ENCODE measurements at regions of chrX and their contacts with region 1.

Region 1: GRCh38 chrX:154478728-154479622 is at the start of gene LAGE3:
- DNase-seq: peak; percentile 93
- H3K4me3 Mint-ChIP-seq: peak within 1 kb of the TSS; percentile 88
- H3K27ac Mint-ChIP-seq: peak within 1 kb of the TSS; percentile 91
- H3K4me1 Mint-ChIP-seq: peaks cover 23% of the 10 kb centered on the region
- H3K27me3 Mint-ChIP-seq: no peaks in the 10 kb centered on the region
- total RNA-seq, gene LAGE3: 60.3 and 63.2 TPM in 2 replicates

Region 2: DNA sequence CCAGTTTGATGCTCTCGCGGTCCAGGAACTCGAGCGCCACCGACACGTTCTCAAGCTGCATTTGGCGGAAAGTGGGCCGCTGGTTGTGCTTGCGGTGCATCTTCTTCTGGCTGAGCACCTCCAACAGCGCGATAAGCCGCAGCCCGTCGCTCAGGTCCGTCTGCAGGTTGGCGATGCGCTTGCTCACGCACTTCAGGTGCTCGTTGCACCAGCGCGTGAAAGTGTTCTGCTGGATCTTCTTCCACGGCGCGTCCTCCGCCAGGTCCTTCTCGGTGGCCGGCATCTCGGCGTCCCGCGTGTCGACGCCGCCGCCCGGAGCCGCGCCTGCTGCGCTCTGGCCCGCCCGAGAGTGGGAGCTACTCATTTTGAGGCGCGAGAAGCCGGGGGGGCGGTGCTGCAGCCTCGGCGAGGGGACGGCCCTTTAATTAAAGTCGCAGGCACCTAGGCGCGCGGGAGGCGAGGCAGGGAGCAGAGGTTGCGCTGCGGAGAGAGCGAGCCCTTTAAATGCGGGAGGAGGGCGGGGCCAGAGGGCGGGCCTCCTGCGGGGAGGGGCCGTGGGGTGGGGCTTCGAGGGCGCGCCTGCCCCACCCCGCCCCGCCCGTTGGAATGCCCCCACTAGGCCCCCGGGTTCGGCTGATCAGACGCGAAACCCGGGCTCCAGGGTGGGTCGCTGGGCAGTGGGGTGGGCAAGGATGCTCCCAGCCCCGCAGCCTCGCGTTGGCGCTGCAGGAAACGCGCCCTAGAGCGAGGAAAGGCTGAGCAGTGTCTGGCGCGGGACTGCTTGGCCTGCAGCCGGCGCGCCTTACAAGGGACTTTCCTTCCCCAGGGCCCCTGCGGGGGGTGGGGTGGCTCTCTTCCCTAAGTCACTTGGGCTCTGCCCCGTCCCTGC is 107.8 kb before region 1 on chrX:
- intact Hi-C with region 1: loop called (anchors 1 kb)
- DNase-seq: peak; percentile 88
- H3K4me3 Mint-ChIP-seq: peak overlapping the region; percentile 84
- H3K27ac Mint-ChIP-seq: peak overlapping the region; percentile 63
- H3K4me1 Mint-ChIP-seq: peaks cover 11% of the 10 kb centered on the region
- H3K27me3 Mint-ChIP-seq: no peaks in the 10 kb centered on the region

Region 3: DNA sequence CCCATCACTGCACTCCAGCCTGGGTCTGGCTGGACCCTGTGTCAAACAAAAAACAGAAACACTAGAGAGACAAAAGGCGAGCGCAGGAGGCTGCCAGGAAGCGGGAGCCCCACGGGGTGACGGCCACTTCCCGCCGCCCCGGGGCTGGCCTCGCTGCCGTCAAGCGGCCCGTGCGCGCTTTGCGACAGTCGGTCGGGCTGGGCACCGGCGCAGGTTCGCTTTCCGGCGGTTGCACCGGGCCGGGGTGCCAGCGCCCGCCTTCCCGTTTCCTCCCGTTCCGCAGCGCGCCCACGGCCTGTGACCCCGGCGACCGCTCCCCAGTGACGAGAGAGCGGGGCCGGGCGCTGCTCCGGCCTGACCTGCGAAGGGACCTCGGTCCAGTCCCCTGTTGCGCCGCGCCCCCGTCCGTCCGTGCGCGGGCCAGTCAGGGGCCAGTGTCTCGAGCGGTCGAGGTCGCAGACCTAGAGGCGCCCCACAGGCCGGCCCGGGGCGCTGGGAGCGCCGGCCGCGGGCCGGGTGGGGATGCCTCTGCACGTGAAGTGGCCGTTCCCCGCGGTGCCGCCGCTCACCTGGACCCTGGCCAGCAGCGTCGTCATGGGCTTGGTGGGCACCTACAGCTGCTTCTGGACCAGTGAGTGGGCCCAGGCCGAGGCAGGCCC is 67.5 kb before region 1 on chrX and contains the start of gene TAFAZZIN:
- intact Hi-C with region 1: loop called (anchors 5 kb)
- DNase-seq: peak; percentile 74
- H3K4me3 Mint-ChIP-seq: peak within 1 kb of the TSS; percentile 93
- H3K27ac Mint-ChIP-seq: peak within 1 kb of the TSS; percentile 94
- H3K4me1 Mint-ChIP-seq: peaks cover 12% of the 10 kb centered on the region
- H3K27me3 Mint-ChIP-seq: no peaks in the 10 kb centered on the region
- total RNA-seq, gene TAFAZZIN: 65.2 and 69.2 TPM in 2 replicates

Region 4: GRCh38 chrX:154436983-154437719 is 41.8 kb before region 1 on chrX and contains the start of gene GDI1:
- intact Hi-C with region 1: loop called (anchors 2 kb)
- DNase-seq: peak; percentile 48
- H3K4me3 Mint-ChIP-seq: peak within 1 kb of the TSS; percentile 87
- H3K27ac Mint-ChIP-seq: peak within 1 kb of the TSS; percentile 77
- H3K4me1 Mint-ChIP-seq: peaks cover 6% of the 10 kb centered on the region
- H3K27me3 Mint-ChIP-seq: no peaks in the 10 kb centered on the region
- total RNA-seq, gene GDI1: 110 and 113 TPM in 2 replicates

Region 5: GRCh38 chrX:154443992-154444754 is 34.8 kb before region 1 on chrX and contains the start of gene FAM50A:
- intact Hi-C with region 1: loop called (anchors 1 kb)
- DNase-seq: peak; percentile 73
- H3K4me3 Mint-ChIP-seq: peak within 1 kb of the TSS; percentile 78
- H3K27ac Mint-ChIP-seq: peak within 1 kb of the TSS; percentile 78
- H3K4me1 Mint-ChIP-seq: no peaks in the 10 kb centered on the region
- H3K27me3 Mint-ChIP-seq: no peaks in the 10 kb centered on the region
- total RNA-seq, gene FAM50A: 84.9 and 95.4 TPM in 2 replicates

Region 6: DNA sequence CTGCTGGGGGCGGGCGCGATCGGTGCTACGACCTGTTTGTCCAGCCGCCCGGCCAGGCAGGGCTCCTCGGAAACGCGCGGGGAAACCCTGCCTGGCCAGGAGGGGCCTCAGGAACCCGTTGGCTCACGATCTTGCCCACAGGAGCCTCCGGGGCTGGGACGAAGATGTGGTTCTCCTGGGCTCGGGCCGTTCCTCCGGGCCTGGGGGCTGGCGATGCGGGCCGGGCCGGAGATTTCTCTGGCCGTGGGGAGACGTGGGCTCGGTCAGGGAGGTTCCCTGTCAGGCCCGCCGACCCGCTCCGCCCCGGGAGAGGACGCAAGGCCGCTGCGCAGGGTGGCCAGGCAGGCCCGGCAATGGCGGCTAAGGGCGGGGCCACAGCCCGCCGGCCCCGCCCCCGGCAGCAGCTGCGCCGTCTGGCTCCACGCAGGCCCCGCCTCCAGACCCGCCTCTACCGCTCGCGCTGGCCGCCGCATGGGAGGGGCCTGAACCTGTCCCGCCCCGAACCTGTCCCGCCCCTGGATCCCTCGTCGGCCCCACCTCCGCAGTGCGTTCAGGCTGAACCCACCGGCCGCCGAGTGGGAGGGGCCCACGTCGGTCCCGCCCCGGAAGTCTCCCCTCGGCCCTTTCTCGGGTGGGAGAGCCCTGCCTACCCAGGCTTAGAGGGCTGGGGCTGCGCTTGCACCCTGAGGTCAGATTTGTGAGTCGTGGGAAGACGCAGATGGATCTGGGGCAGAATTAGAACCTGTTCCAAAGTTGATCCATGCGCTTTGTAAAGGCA is 37.1 kb after region 1 on chrX and contains the start of gene FAM3A:
- intact Hi-C with region 1: loop called (anchors 1 kb)
- DNase-seq: peak; percentile 87
- H3K4me3 Mint-ChIP-seq: peak within 1 kb of the TSS; percentile 87
- H3K27ac Mint-ChIP-seq: peak within 1 kb of the TSS; percentile 91
- H3K4me1 Mint-ChIP-seq: peaks cover 29% of the 10 kb centered on the region
- H3K27me3 Mint-ChIP-seq: no peaks in the 10 kb centered on the region
- total RNA-seq, gene FAM3A: 35.9 and 40.1 TPM in 2 replicates

Region 7: DNA sequence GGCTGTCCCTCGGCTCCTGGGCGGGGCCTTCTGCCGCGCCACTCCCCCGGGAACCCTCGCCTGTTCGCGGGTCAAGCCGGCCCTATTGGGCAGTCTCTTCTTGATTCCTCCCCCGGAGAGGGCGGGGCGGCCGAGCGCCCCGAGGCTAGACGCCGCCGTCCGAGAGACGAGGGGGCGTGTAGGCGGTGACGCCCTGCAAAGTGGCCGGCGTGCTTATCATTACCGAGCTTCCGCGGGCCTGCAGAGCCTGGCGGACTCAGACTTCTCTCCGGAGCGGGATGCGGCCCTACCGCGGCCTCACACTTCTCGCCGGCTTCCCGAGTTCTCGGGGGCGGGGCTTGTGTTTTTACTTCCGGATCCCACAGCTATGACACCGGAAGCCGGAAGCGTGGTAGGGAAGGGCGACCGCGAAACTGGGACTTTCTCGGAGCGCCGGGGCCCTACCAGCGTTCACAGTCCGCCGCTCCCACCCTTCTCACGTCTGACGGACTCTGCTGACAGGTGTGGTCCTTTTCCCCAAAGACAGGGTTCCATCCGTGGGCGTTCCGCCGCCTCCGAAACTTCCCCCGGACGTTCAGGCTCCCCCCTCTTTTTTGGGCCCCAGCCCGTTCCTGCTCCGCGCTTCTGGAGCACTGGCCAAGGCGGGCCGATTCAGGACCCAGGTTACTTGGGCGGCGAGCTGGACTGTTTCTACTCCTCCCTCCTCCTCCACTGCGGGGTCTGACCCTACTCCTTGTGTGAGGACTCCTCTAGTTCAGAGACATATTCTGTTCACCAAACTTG is 68.5 kb after region 1 on chrX and contains the start of gene IKBKG:
- intact Hi-C with region 1: loop called (anchors 2 kb)
- DNase-seq: peak; percentile 86
- H3K4me3 Mint-ChIP-seq: peak within 1 kb of the TSS; percentile 96
- H3K27ac Mint-ChIP-seq: peak within 1 kb of the TSS; percentile 98
- H3K4me1 Mint-ChIP-seq: peaks cover 33% of the 10 kb centered on the region
- H3K27me3 Mint-ChIP-seq: no peaks in the 10 kb centered on the region
- total RNA-seq, gene IKBKG: 40.7 and 41.2 TPM in 2 replicates